A673 (cell line): ENCODE measurements at regions of chr1 and their contacts with region 1.

Region 1: GRCh38 chr1:45282351-45282750 is 44.3 kb upstream of the HPDL start:
- DNase-seq: no peak
- H3K4me3 ChIP-seq: no peak overlapping the region
- H3K27ac ChIP-seq: no peak overlapping the region
- H3K4me1 ChIP-seq: no peaks in the 10 kb centered on the region
- H3K27me3 ChIP-seq: no peaks in the 10 kb centered on the region
- CTCF ChIP-seq: no peak

Region 2: DNA sequence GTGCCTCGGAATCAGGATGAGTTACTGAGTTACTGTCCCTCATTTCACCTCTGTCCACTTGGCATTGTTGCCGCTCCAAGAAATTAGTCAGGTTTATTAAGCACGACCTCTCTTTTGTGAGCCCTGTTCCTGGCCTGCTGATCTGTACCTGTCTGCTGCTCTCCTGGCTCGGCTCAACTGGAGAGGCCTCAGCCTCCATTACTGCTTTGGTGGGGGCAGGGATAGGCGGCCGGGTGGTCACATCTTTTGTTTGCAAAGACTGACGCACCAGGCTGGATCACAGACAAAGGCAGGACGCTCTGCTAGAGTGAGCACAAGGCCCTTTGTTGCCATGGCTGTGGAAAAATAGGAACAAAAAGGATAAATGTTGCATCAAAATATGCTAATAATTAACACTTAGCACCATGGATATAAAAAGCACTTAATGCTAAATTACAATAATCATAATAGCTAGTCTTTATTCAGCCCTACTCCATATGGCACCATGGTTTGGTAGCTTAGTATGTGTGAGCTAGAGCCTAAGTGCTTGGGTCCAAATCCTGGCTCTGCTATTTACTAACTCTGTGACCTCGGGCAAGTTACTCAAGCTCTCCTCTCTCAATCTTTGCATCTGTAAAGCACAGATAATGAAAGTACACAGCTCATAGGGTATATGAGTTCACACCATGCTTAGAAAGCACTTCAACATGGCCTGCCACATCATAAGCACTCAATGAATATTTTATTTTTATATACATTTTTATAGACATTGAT is 15.4 kb after region 1 on chr1:
- CTCF ChIA-PET with region 1: no interaction called
- POLR2A ChIA-PET with region 1: interaction called, 13 read pairs
- intact Hi-C with region 1: no loop called
- DNase-seq: no peak
- H3K4me3 ChIP-seq: no peak overlapping the region
- H3K27ac ChIP-seq: no peak overlapping the region
- H3K4me1 ChIP-seq: peaks cover under 1% of the 10 kb centered on the region
- H3K27me3 ChIP-seq: no peaks in the 10 kb centered on the region
- CTCF ChIP-seq: no peak